Ascending aorta (tissue), 2 donors: ENCODE measurements at regions of chr4 and their contacts with region 1.

Region 1: DNA sequence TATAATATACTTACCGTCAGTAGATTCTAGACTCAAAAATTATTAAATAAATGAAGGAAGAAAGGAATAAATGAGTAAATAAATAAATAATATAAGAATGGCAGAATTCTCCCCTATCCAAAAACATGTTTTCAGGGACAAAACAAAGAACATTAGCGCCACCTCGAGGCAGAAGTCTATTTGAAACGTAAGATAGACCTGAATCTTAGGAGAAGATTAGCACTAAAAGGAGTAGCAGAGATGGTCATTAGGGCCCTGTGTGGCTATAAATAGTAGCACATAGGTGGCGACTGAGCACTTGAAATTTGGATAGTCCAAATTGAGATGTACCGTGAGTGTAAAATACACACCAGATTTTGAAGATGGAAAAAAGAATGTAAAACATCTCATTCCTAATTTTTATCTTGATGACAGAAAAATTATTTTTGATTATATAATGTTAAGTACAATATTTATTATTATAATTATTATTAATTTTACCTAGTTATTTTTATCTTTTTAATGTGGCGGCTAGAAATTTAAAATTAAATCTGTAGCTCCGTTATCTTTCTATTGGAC is 24.3 kb upstream of the SRD5A3 start:
- DNase-seq: peak in 1 of 2 donors; percentile 86
- H3K4me3 ChIP-seq: no peak overlapping the region
- H3K27ac ChIP-seq: no peak overlapping the region
- H3K4me1 ChIP-seq: no peaks in the 10 kb centered on the region
- H3K27me3 ChIP-seq: no peaks in the 10 kb centered on the region
- CTCF ChIP-seq: peak; percentile 19 to 64 (median 59)

Region 2: DNA sequence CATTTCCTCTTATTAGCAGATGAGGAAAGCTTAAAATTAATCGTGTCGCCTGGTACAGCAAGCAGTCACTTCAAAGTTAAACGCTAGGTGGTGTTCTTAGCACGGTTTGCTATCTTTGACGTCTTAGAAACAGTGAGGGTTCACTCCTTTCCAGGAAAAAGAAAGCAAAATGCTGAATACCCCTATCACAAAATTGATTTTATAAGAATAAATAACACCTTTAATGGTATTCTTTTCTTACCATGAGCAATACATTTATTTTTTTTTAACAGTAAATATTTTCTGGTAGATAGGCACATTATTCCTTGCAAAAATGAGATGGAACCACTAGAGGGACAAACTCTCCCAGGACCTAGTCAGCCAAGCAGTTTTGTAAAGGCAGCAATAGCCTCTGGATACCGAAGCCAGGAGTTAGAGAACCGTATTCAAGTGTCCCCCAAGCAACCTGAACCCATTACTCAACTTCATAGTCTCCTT is 350.3 kb before region 1 on chr4:
- intact Hi-C with region 1: loop called (anchors 2 kb)
- DNase-seq: no peak
- H3K4me3 ChIP-seq: no peak overlapping the region
- H3K27ac ChIP-seq: no peak overlapping the region
- H3K4me1 ChIP-seq: no peaks in the 10 kb centered on the region
- H3K27me3 ChIP-seq: no peaks in the 10 kb centered on the region
- CTCF ChIP-seq: peak; percentile 22 to 67 (median 54)

Region 3: GRCh38 chr4:54999003-54999402 is 322.8 kb before region 1 on chr4:
- intact Hi-C with region 1: loop called (anchors 2 kb)
- DNase-seq: no peak
- H3K4me3 ChIP-seq: no peak overlapping the region
- H3K27ac ChIP-seq: no peak overlapping the region
- H3K4me1 ChIP-seq: no peaks in the 10 kb centered on the region
- H3K27me3 ChIP-seq: no peaks in the 10 kb centered on the region
- CTCF ChIP-seq: peak in 2 of 3 experiments; percentile 38 to 62

Region 4: GRCh38 chr4:55308071-55308470 is 13.7 kb before region 1 on chr4:
- intact Hi-C with region 1: no loop called
- DNase-seq: no peak
- H3K4me3 ChIP-seq: no peak overlapping the region
- H3K27ac ChIP-seq: no peak overlapping the region
- H3K4me1 ChIP-seq: no peaks in the 10 kb centered on the region
- H3K27me3 ChIP-seq: no peaks in the 10 kb centered on the region
- CTCF ChIP-seq: no peak